B cell (primary cell): ENCODE measurements at regions of chr5 and their contacts with region 1.

Region 1: DNA sequence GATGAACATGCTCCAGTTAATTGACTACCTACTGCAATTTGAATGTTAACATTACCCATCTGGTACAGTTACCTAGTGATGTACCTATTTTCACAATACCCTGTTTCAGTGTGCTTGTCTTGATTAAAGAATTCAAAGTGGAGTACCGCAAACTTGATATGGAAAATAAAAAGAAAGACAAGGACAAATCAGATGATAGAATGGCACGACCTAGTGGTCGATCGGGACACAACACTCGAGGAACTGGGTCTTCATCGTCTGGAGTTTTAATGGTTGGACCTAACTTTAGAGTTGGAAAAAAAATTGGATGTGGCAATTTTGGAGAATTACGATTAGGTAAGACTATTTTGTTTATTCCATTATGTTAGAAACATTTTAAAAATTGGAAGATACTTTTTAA is 33.5 kb downstream of the CSNK1G3 start:
- DNase-seq: peak; percentile 43
- ATAC-seq: no peak
- H3K4me3 ChIP-seq: no peak overlapping the region
- H3K4me3 Mint-ChIP-seq: no peak overlapping the region
- H3K27ac ChIP-seq: no peak overlapping the region
- H3K27ac Mint-ChIP-seq: no peak overlapping the region
- H3K4me1 ChIP-seq: peaks cover 43 to 66% of the 10 kb centered on the region in 2 donors
- H3K4me1 Mint-ChIP-seq: peaks cover 75% of the 10 kb centered on the region
- H3K27me3 ChIP-seq: no peaks in the 10 kb centered on the region
- H3K27me3 Mint-ChIP-seq: no peaks in the 10 kb centered on the region
- CTCF ChIP-seq: peak; percentile 52

Region 2: GRCh38 chr5:123511648-123512605 is 33.6 kb before region 1 on chr5 and contains the start of gene CSNK1G3:
- CTCF ChIA-PET with region 1: interaction called, 4 read pairs
- POLR2A ChIA-PET with region 1: interaction called, 4 read pairs
- intact Hi-C with region 1: loop called (anchors 1 kb)
- DNase-seq: peak; percentile 95
- ATAC-seq: peak; percentile 89
- H3K4me3 ChIP-seq: peak within 1 kb of the TSS; percentile 86 to 92 (median 89)
- H3K4me3 Mint-ChIP-seq: peak within 1 kb of the TSS; percentile 100
- H3K27ac ChIP-seq: peak within 1 kb of the TSS; percentile 89 to 90
- H3K27ac Mint-ChIP-seq: peak within 1 kb of the TSS; percentile 99
- H3K4me1 ChIP-seq: peaks cover 33 to 39% of the 10 kb centered on the region in 2 donors
- H3K4me1 Mint-ChIP-seq: peaks cover 41% of the 10 kb centered on the region
- H3K27me3 ChIP-seq: no peaks in the 10 kb centered on the region
- H3K27me3 Mint-ChIP-seq: peaks cover 3% of the 10 kb centered on the region
- CTCF ChIP-seq: no peak
- total RNA-seq, gene CSNK1G3: 140 and 148 TPM in 2 replicates

Region 3: GRCh38 chr5:123559434-123559775 is 13.9 kb after region 1 on chr5:
- CTCF ChIA-PET with region 1: interaction called, 4 read pairs
- POLR2A ChIA-PET with region 1: no interaction called
- intact Hi-C with region 1: loop called (anchors 2 kb)
- DNase-seq: no peak
- ATAC-seq: no peak
- H3K4me3 ChIP-seq: no peak overlapping the region
- H3K4me3 Mint-ChIP-seq: no peak overlapping the region
- H3K27ac ChIP-seq: no peak overlapping the region
- H3K27ac Mint-ChIP-seq: no peak overlapping the region
- H3K4me1 ChIP-seq: no peaks in the 10 kb centered on the region
- H3K4me1 Mint-ChIP-seq: peaks cover 33% of the 10 kb centered on the region
- H3K27me3 ChIP-seq: no peaks in the 10 kb centered on the region
- H3K27me3 Mint-ChIP-seq: no peaks in the 10 kb centered on the region
- CTCF ChIP-seq: no peak

Region 4: DNA sequence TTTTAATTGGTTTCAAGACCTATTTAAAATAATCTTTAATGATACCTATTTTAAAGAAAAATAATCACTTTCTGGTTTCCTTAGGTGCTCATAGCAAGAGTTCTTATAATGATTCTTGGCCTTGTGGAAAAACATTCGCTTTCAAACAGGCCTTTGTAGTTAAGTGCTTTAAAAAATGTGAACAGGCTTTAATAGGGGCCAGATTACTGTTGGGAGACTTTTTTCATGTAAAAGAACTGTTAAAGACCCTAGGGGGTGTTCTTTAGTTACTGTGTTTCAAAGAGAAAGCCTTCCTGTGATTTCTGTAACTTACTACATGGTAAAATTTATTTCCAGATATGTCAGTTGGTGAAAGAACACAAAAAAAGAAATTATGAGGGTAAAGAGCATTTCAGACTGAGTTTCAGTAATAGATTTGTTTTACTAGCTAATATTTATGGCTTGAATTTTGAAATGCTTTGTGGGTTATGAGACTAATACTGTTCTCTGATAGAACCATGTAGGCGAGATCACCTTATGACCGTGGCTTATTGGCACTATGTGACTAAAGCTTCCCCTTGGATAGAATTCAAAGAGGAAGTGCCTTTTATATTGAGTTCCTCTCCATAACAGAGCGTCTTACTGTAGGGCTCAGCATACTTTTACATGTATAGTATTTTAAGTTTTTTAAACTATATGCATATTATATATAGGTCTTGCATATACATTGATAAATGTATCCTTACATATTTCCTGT is 37.2 kb after region 1 on chr5:
- CTCF ChIA-PET with region 1: interaction called, 3 read pairs
- POLR2A ChIA-PET with region 1: no interaction called
- intact Hi-C with region 1: loop called (anchors 5 kb)
- DNase-seq: no peak
- ATAC-seq: no peak
- H3K4me3 ChIP-seq: no peak overlapping the region
- H3K4me3 Mint-ChIP-seq: no peak overlapping the region
- H3K27ac ChIP-seq: no peak overlapping the region
- H3K27ac Mint-ChIP-seq: no peak overlapping the region
- H3K4me1 ChIP-seq: no peaks in the 10 kb centered on the region
- H3K4me1 Mint-ChIP-seq: peaks cover 2% of the 10 kb centered on the region
- H3K27me3 ChIP-seq: no peaks in the 10 kb centered on the region
- H3K27me3 Mint-ChIP-seq: no peaks in the 10 kb centered on the region
- CTCF ChIP-seq: no peak